ENCODE measurements at regions of chr18 and their contacts with region 1.

Region 1: GRCh38 chr18:63161761-63162195 is 157.8 kb downstream of the BCL2 start:
- DNase-seq: peak; percentile 90
- H3K4me3 Mint-ChIP-seq: peak overlapping the region; percentile 78
- H3K27ac Mint-ChIP-seq: peak overlapping the region; percentile 98
- H3K4me1 Mint-ChIP-seq: peaks cover 92% of the 10 kb centered on the region
- H3K27me3 Mint-ChIP-seq: no peaks in the 10 kb centered on the region

Region 2: GRCh38 chr18:62522504-62523254 is 639.1 kb before region 1 on chr18 and contains the start of gene ZCCHC2:
- CTCF ChIA-PET with region 1: no interaction called
- POLR2A ChIA-PET with region 1: no interaction called
- intact Hi-C with region 1: loop called (anchors 2 kb)
- DNase-seq: peak; percentile 99
- H3K4me3 Mint-ChIP-seq: peak within 1 kb of the TSS; percentile 94
- H3K27ac Mint-ChIP-seq: peak within 1 kb of the TSS; percentile 94
- H3K4me1 Mint-ChIP-seq: peaks cover 16% of the 10 kb centered on the region
- H3K27me3 Mint-ChIP-seq: no peaks in the 10 kb centered on the region
- total RNA-seq, gene ZCCHC2: 24.9 to 27.5 TPM

Region 3: DNA sequence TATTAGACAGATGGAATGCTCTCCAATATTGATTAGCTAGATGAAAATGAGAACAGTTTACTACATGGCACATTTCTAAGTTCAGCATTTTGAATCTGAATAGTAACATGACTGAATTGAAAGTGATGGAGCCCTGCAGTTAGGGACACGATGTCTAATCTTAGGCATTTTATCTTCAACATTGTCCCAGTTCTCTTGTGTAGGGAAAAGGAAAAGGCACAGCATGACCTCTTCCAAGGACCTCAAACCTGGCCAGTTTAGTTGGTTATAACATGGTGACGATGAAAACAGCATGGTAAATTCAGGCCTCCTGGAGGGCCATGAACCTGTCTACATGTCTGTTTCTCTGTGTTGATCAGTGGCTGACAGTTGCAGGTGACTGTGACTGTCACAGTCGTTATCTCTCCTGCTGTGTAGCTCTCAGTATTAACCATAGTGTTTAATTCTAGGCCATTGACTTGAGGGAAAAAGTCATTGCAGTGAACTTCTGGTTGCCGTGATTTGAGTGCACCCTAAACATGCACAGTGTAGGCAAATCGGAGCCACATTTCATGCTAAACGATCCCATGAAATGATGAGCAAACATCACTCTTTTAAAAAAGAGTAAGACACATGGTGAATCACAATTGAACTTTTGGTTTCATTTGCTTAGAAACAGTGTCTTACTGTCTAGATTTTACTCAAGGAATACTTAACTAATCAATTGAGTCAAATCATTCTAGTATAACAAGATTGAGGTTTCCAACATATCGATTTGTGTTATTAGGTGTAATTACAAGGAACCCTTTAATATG is 316.7 kb before region 1 on chr18:
- CTCF ChIA-PET with region 1: no interaction called
- POLR2A ChIA-PET with region 1: no interaction called
- intact Hi-C with region 1: loop called (anchors 1 kb)
- DNase-seq: peak; percentile 69
- H3K4me3 Mint-ChIP-seq: peak overlapping the region; percentile 45
- H3K27ac Mint-ChIP-seq: peak overlapping the region; percentile 90
- H3K4me1 Mint-ChIP-seq: peaks cover 41% of the 10 kb centered on the region
- H3K27me3 Mint-ChIP-seq: no peaks in the 10 kb centered on the region

Region 4: DNA sequence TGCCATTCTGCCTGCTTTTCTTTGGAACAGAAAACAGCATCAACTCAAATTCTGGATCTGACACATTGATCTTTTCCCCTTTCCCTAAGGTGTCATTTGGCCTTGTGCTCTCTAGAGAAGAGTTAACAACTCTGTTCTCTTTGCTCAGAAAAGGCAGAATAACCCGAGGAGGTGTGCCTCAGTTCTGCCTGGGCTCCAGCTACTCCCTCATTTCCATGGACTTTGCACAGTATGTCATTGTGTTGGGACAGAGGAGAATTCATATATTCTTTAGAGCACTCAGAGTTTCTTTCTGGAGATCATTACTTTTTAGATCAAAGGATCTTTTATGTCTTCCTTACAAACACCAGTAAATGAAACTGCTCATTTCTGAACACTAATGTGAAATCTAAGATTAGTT is 197.3 kb before region 1 on chr18:
- CTCF ChIA-PET with region 1: no interaction called
- POLR2A ChIA-PET with region 1: no interaction called
- intact Hi-C with region 1: no loop called
- DNase-seq: no peak
- H3K4me3 Mint-ChIP-seq: no peak overlapping the region
- H3K27ac Mint-ChIP-seq: no peak overlapping the region
- H3K4me1 Mint-ChIP-seq: no peaks in the 10 kb centered on the region
- H3K27me3 Mint-ChIP-seq: no peaks in the 10 kb centered on the region

Region 5: GRCh38 chr18:63138436-63139340 is 23.1 kb before region 1 on chr18:
- CTCF ChIA-PET with region 1: interaction called, 21 read pairs
- POLR2A ChIA-PET with region 1: interaction called, 3 read pairs
- intact Hi-C with region 1: loop called (anchors 1 kb)
- DNase-seq: peak; percentile 55
- H3K4me3 Mint-ChIP-seq: peak overlapping the region; percentile 76
- H3K27ac Mint-ChIP-seq: peak overlapping the region; percentile 89
- H3K4me1 Mint-ChIP-seq: peaks cover 70% of the 10 kb centered on the region
- H3K27me3 Mint-ChIP-seq: no peaks in the 10 kb centered on the region

Region 6: GRCh38 chr18:63216516-63217311 is 54.9 kb after region 1 on chr18:
- CTCF ChIA-PET with region 1: interaction called, 6 read pairs
- POLR2A ChIA-PET with region 1: interaction called, 18 read pairs
- intact Hi-C with region 1: loop called (anchors 1 kb)
- DNase-seq: peak; percentile 50
- H3K4me3 Mint-ChIP-seq: peak overlapping the region; percentile 64
- H3K27ac Mint-ChIP-seq: peak overlapping the region; percentile 93
- H3K4me1 Mint-ChIP-seq: peaks cover 95% of the 10 kb centered on the region
- H3K27me3 Mint-ChIP-seq: no peaks in the 10 kb centered on the region

Region 7: DNA sequence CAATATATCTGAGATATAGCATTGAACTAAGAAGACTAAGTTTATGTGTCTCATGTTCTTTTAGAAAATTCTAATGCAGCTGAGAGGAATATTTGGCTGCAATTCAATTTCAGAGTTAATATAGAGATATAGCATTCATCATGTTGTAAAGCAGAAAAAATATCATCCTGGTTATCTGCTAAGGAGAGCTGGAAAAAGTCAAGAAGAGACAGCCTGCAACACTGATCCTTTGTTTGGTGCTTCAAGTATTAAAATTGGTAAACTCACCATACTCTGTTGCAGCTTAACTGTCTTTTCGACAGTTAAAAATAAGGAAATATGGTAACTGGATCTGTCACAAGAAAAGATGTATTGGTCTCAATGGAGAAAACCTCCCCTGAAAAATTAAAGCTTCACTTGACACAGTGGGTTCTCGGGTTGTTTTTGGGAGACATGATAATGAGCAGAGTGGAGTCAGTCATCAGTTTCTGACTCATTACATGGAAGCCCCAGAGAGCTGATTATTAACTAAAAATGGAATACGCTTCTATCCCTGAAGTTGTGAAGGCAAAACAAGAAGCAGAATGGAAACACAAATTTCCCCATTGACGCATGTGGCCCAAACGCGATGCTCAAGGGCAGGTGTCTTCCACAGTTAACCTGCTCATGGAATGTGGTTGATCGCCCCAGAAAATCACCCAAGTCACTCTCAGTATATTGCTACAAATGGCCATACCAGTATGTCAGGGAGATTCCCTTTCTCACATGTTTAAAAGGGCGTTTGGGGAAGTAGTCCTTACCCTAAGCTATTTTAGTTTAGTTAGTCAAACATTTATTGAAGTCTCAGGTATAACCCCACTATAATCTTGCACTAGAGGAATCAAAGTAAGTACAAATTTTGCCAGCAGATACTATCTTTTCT is 149.6 kb after region 1 on chr18:
- CTCF ChIA-PET with region 1: interaction called, 3 read pairs
- POLR2A ChIA-PET with region 1: interaction called, 14 read pairs
- intact Hi-C with region 1: no loop called
- DNase-seq: no peak
- H3K4me3 Mint-ChIP-seq: no peak overlapping the region
- H3K27ac Mint-ChIP-seq: peak overlapping the region; percentile 14
- H3K4me1 Mint-ChIP-seq: peaks cover 85% of the 10 kb centered on the region
- H3K27me3 Mint-ChIP-seq: no peaks in the 10 kb centered on the region

Region 8: GRCh38 chr18:63741769-63742168 is 580.0 kb after region 1 on chr18:
- CTCF ChIA-PET with region 1: no interaction called
- POLR2A ChIA-PET with region 1: no interaction called
- intact Hi-C with region 1: no loop called
- DNase-seq: no peak
- H3K4me3 Mint-ChIP-seq: no peak overlapping the region
- H3K27ac Mint-ChIP-seq: no peak overlapping the region
- H3K4me1 Mint-ChIP-seq: no peaks in the 10 kb centered on the region
- H3K27me3 Mint-ChIP-seq: peaks cover 2% of the 10 kb centered on the region